Transverse colon (tissue), 4 donors: ENCODE measurements at regions of chr3 and their contacts with region 1.

Region 1: GRCh38 chr3:71583566-71584449 is at the start of gene FOXP1:
- DNase-seq: peak; percentile 83
- H3K4me3 ChIP-seq: peak within 1 kb of the TSS; percentile 66 to 87 (median 70)
- H3K27ac ChIP-seq: peak within 1 kb of the TSS; percentile 97 to 100 (median 98)
- H3K4me1 ChIP-seq: peaks cover 3 to 41% (median 17%) of the 10 kb centered on the region in 4 donors
- H3K27me3 ChIP-seq: no peaks in the 10 kb centered on the region
- CTCF ChIP-seq: no peak
- EP300 ChIP-seq: no peak
- POLR2A ChIP-seq: peak; percentile 63
- total RNA-seq, gene FOXP1: 102 to 260 (median 150) TPM

Region 2: DNA sequence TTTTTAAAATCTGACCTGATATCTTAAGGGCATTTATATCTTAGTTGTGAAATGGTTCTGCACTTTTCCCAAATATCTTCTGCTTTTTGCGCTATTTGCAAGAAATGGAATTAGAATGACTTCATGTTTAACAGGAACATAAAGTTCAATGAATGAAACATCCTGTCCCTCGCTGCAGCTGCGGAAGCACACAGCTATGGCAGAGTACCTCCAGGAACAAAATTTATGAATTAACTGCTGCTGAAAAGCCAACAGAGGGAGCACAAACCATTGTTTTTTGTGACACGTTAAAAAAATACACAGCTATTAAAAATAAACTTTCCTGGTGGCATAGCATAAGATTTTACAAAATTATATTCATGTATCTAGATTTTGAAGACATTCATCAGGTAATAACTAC is 867.0 kb before region 1 on chr3:
- in situ Hi-C with region 1: loop called in 1 of 4 experiments (anchors 25 kb)
- intact Hi-C with region 1: no loop called
- DNase-seq: no peak
- H3K4me3 ChIP-seq: no peak overlapping the region
- H3K27ac ChIP-seq: no peak overlapping the region
- H3K4me1 ChIP-seq: no peaks in the 10 kb centered on the region
- H3K27me3 ChIP-seq: no peaks in the 10 kb centered on the region
- CTCF ChIP-seq: peak in 2 of 5 experiments; percentile 21 to 24
- EP300 ChIP-seq: no peak
- POLR2A ChIP-seq: no peak

Region 3: GRCh38 chr3:71006810-71007785 is 576.7 kb before region 1 on chr3:
- in situ Hi-C with region 1: loop called in 2 of 4 experiments (anchors 10 to 25 kb)
- intact Hi-C with region 1: no loop called
- DNase-seq: no peak
- H3K4me3 ChIP-seq: no peak overlapping the region
- H3K27ac ChIP-seq: peak overlapping the region; percentile 66 to 74 (median 70)
- H3K4me1 ChIP-seq: peaks cover 22 to 68% (median 34%) of the 10 kb centered on the region in 4 donors
- H3K27me3 ChIP-seq: no peaks in the 10 kb centered on the region
- CTCF ChIP-seq: peak; percentile 47 to 59 (median 50)
- EP300 ChIP-seq: no peak
- POLR2A ChIP-seq: no peak

Region 4: DNA sequence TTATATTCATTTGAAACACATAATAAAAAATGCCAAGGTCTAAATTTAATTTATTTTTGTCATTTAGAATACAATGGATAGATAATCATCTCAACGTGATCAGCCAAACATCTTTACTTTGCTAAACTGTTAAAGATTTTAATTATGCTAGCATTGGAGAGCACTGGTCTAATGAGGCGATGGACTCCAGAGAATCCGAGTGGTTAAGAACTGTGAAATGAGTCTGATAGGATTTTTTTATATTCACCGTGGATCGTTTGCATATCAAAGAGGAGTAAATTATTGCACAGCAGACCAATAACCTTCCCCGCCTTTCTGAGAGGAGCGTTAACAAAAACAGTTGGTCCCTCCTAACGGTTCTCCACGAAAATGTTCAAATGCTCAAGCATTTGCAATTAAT is 541.0 kb before region 1 on chr3:
- in situ Hi-C with region 1: no loop called
- intact Hi-C with region 1: no loop called
- DNase-seq: no peak
- H3K4me3 ChIP-seq: no peak overlapping the region
- H3K27ac ChIP-seq: no peak overlapping the region
- H3K4me1 ChIP-seq: peaks cover 19 to 55% (median 36%) of the 10 kb centered on the region in 4 donors
- H3K27me3 ChIP-seq: no peaks in the 10 kb centered on the region
- CTCF ChIP-seq: no peak
- EP300 ChIP-seq: no peak
- POLR2A ChIP-seq: no peak

Region 5: GRCh38 chr3:71130471-71131374 is 453.1 kb before region 1 on chr3:
- in situ Hi-C with region 1: loop called in 1 of 4 experiments (anchors 10 kb)
- intact Hi-C with region 1: loop called (anchors 10 kb)
- DNase-seq: peak; percentile 79
- H3K4me3 ChIP-seq: peak overlapping the region; percentile 21 to 64 (median 45)
- H3K27ac ChIP-seq: peak overlapping the region; percentile 86 to 94 (median 93)
- H3K4me1 ChIP-seq: peaks cover 33 to 89% (median 64%) of the 10 kb centered on the region in 4 donors
- H3K27me3 ChIP-seq: no peaks in the 10 kb centered on the region
- CTCF ChIP-seq: no peak
- EP300 ChIP-seq: no peak
- POLR2A ChIP-seq: peak; percentile 85

Region 6: DNA sequence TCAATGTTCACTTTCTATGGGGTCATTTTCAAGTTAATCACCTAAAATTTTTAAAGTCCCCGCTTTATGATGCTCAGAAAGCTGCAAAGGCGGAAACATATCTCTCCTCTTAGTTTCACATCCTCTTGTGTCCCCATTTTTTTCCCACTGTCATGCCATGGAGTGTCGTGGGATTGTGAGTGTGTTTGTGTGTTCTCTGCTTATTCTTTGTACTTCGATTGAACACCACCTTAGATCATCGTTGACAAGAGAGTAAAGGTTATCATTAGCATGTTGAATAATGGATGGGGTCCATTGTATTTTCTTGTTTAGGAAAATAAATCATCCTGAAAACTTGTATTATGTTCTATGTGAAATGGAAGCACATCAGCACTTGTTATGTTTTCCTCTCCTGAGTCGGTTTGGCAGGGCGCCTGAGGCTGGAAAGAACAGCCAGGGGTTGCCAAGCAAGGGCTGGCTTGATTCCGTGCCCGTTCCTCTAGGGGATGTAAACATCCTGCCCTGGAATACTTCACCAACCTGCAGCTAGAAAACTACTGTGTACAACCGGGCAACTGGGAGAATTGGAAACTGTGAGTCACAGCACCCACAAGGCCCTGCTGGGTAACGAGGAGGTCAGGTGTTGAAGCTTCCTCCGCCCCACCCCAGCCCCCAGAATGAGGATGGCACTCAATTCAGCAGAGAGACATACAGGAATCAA is 74.2 kb after region 1 on chr3:
- in situ Hi-C with region 1: no loop called
- intact Hi-C with region 1: no loop called
- DNase-seq: peak; percentile 72
- H3K4me3 ChIP-seq: no peak overlapping the region
- H3K27ac ChIP-seq: peak overlapping the region; percentile 38 to 76 (median 60)
- H3K4me1 ChIP-seq: peaks cover 0 to 14% (median 0%) of the 10 kb centered on the region in 4 donors
- H3K27me3 ChIP-seq: no peaks in the 10 kb centered on the region
- CTCF ChIP-seq: no peak
- EP300 ChIP-seq: no peak
- POLR2A ChIP-seq: no peak